ENCODE measurements at regions of chr3 and their contacts with region 1.

Region 1: GRCh38 chr3:32934150-32934742 is 17.2 kb upstream of the CCR4 start:
- DNase-seq: peak; percentile 28
- CTCF ChIP-seq: peak; percentile 70

Region 2: DNA sequence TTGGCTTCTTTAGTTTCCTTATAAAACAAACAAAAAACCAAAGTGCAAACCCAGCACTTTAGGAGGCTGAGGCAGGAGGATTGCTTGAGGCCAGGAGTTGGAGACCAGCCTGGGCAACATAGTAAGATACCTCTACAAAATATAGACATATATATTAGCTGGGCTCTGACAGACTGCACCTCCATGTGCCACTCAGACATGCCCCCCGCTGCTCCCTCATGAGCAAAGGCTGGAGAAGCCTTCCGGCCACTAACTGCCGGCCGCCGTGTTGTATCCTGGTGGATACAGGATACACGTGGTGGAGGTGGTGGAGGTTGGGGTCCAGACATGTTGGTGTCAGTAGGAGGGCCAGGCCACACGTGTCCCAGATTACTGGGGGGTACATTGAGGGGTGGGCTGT is 12.2 kb before region 1 on chr3:
- CTCF ChIA-PET with region 1: interaction called, 11 read pairs
- POLR2A ChIA-PET with region 1: no interaction called
- DNase-seq: no peak
- CTCF ChIP-seq: no peak

Measured in GM10248 (cell line).